ENCODE measurements at regions of chr13 and their contacts with region 1.

Region 1: GRCh38 chr13:110925023-110925612 is 10.2 kb upstream of the ANKRD10 start:
- DNase-seq: no peak
- ATAC-seq: no peak
- H3K4me3 ChIP-seq: no peak overlapping the region
- H3K27ac ChIP-seq: no peak overlapping the region
- H3K4me1 ChIP-seq: peaks cover 15% of the 10 kb centered on the region
- H3K27me3 ChIP-seq: no peaks in the 10 kb centered on the region
- CTCF ChIP-seq: peak; percentile 7 to 16 (median 10); a peak in 1 of 6 replicates
- EP300 ChIP-seq: no peak
- POLR2A ChIP-seq: no peak
- RAD21 ChIP-seq: peak; percentile 45; the same call in 1 of the 2 replicates

Region 2: GRCh38 chr13:110882972-110883371 is 42.1 kb before region 1 on chr13:
- CTCF ChIA-PET with region 1: no interaction called
- POLR2A ChIA-PET with region 1: no interaction called
- RAD21 ChIA-PET with region 1: no interaction called
- SMC1A ChIA-PET with region 1: no interaction called
- in situ Hi-C with region 1: no loop called
- intact Hi-C with region 1: no loop called
- DNase-seq: no peak
- ATAC-seq: no peak
- H3K4me3 ChIP-seq: no peak overlapping the region
- H3K27ac ChIP-seq: no peak overlapping the region
- H3K4me1 ChIP-seq: no peaks in the 10 kb centered on the region
- H3K27me3 ChIP-seq: no peaks in the 10 kb centered on the region
- CTCF ChIP-seq: no peak
- EP300 ChIP-seq: no peak
- POLR2A ChIP-seq: no peak
- RAD21 ChIP-seq: no peak

Region 3: DNA sequence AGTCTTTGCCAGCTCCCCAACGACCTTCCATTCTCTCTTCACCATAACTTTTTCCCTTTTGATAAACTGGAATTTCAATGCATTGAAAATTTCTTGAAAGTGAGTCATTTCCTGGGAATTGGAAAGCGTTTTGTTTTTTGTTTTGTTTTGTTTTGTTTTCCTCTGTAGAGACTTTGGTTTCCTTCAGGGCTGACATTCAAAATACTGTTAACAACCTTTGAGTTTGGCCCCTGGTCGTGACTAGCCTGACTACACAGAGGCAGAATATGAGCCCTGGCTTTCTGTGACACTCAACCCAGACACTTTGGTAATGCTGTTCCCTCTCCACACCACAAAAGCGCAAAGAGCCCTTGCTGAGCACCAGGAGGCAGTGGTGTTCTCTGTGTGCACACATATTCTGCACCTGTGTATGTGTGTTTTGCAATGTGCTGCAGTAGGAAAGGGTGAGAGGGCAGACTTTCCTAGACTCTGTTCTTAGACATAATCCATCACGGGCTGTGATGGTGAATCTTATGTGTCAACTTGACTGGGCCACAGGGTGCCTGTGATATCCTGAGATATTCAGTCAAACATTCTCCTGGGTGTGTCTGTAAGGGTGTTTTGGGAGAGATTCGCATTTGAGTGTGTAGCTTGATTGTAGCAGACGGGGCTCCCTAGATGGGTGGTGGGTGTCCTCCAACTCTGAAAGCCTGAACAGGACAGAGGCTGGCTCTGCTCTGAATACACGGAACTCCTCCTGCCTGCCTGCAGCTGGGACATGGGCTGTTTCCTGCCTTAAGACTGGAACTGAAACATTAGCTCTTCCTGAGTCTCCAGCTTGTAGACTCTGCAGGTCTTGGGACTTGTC is 19.2 kb after region 1 on chr13:
- CTCF ChIA-PET with region 1: interaction called, 4 read pairs
- POLR2A ChIA-PET with region 1: interaction called, 4 read pairs
- RAD21 ChIA-PET with region 1: interaction called, 7 read pairs
- SMC1A ChIA-PET with region 1: interaction called, 7 read pairs
- in situ Hi-C with region 1: no loop called
- intact Hi-C with region 1: loop called (anchors 2 kb)
- DNase-seq: no peak
- ATAC-seq: peak; percentile 86
- H3K4me3 ChIP-seq: no peak overlapping the region
- H3K27ac ChIP-seq: no peak overlapping the region
- H3K4me1 ChIP-seq: peaks cover 8% of the 10 kb centered on the region; the same call in 1 of the 2 replicates
- H3K27me3 ChIP-seq: no peaks in the 10 kb centered on the region
- CTCF ChIP-seq: peak; percentile 48 to 66 (median 63); a peak in 5 of 6 replicates
- EP300 ChIP-seq: no peak
- POLR2A ChIP-seq: no peak
- RAD21 ChIP-seq: peak; percentile 92

Region 4: DNA sequence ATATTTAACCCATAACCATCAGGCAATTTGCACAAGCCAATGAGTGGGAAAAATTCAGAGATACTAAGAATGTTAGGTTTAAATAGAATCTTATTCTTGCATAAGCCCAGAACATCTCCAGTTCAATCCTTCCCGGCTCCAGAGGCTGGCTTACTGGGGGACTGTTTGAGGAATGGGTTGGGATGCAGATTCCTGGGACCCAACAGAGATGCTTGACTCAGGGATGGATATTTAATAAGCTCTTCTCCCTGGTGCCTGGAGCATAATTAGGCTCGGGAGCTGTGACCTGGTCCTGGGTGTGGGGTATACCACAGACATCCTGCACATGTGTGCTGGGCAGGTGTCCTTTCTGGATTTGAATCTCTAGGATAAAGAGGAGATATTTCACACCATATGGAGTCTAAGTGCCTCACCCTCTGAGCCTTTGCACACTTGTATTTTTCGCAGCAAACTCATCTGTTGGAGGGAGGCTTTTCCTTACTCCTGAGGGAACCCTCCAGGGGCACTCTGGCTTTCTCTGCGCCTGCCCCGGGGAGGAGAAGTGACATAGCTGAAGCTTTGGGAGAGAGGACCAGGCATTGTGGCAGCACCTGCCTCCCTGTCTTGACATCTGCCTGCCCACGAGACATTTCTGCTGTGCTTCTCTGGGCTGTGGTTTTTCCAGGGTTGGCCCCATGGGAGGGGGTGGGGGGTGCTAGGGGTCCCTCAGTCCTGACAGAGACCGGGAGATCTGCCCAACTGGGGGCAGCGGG is 25.9 kb after region 1 on chr13:
- CTCF ChIA-PET with region 1: interaction called, 4 read pairs
- POLR2A ChIA-PET with region 1: interaction called, 3 read pairs
- RAD21 ChIA-PET with region 1: interaction called, 11 read pairs
- SMC1A ChIA-PET with region 1: no interaction called
- in situ Hi-C with region 1: no loop called
- intact Hi-C with region 1: no loop called
- DNase-seq: no peak
- ATAC-seq: no peak
- H3K4me3 ChIP-seq: no peak overlapping the region
- H3K27ac ChIP-seq: no peak overlapping the region
- H3K4me1 ChIP-seq: no peaks in the 10 kb centered on the region
- H3K27me3 ChIP-seq: no peaks in the 10 kb centered on the region
- CTCF ChIP-seq: no peak
- EP300 ChIP-seq: no peak
- POLR2A ChIP-seq: no peak
- RAD21 ChIP-seq: no peak

Region 5: DNA sequence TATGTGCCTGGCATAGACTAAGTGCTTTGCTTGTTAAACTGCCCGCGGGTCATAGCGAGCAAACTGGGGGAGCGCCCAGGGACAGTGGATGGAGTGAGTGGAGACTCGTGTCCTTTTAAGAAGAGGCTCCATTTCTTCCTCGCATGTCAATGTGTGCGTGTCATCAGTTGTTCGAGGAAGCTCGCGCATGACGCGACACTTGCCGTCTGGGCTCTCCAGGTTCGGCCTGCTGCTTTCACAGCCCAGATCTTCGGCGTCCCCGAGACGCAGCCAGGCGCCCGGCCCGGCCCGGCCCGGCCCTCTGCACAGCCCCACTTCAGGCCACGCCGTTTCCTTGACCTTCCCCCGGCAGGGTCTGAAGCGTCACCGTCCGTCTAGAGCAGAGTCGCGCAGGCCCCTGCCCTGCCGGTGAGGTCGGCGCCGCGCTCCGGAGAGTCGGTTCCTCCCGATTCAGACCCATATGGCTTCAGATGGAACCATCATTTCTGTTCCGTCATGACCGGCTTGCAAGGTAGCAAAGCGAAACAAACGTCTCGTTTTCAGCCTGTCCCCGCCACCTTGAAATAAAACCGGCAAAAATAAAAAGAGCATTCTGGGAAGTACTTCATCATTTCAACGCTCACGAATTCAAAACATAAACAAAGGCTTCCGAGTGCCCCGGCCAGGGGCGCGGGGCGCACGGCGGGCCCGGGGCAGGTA is 189.4 kb after region 1 on chr13:
- CTCF ChIA-PET with region 1: no interaction called
- POLR2A ChIA-PET with region 1: no interaction called
- RAD21 ChIA-PET with region 1: no interaction called
- SMC1A ChIA-PET with region 1: no interaction called
- in situ Hi-C with region 1: no loop called
- intact Hi-C with region 1: no loop called
- DNase-seq: no peak
- ATAC-seq: peak; percentile 78
- H3K4me3 ChIP-seq: peak overlapping the region; percentile 77; the same call in 1 of the 2 replicates
- H3K27ac ChIP-seq: no peak overlapping the region
- H3K4me1 ChIP-seq: no peaks in the 10 kb centered on the region; the same call in 1 of the 2 replicates
- H3K27me3 ChIP-seq: peaks cover 13 to 37% of the 10 kb centered on the region in 2 experiments
- CTCF ChIP-seq: no peak
- EP300 ChIP-seq: no peak
- POLR2A ChIP-seq: no peak
- RAD21 ChIP-seq: no peak

Region 6: DNA sequence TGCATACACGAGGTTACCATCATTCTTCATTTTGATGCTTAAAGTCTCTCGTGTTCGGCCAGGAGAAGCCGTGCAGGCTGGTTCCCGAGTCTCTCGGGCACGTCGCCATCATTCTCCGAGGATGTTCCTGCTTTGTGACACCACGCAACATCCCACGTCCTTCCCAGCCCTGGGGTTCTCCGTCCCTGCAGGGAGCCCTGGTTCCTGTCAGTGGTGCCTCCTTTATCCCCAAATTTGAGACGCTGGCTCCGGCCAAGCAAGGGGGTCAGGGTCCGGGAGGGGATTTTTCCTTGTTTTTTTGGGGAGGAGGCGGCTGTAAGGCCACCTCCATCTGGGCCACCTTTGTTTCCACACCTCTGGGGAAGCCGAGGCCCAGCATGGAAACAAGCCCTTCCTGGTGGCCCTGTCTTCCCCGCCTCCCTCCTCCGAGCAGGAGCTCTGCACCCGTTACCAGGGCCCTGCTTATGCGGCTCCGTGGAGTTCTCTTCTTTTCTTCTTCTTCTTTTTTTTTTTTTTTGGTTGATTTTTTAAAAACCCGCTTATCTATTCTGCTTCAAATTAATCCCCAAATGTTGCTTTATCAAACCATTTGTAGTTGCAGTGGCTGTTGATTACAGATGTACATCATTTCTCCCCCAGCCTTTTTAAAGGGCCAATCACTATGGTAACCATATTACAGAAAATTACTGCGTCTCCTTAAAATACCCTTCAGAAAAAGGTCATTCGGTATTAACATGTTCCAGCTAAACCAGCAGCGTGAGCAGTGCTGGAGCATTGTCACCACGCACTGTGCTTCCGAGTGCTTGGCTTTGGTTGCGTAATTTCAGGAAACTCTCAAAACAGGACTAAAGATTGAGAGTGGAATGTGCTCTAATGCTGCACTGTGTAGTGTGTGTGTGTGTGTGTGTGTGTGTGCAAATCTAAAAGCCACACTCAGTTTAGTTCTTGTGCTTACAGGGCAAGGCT is 445.7 kb after region 1 on chr13:
- CTCF ChIA-PET with region 1: no interaction called
- POLR2A ChIA-PET with region 1: no interaction called
- RAD21 ChIA-PET with region 1: no interaction called
- SMC1A ChIA-PET with region 1: no interaction called
- in situ Hi-C with region 1: no loop called
- intact Hi-C with region 1: no loop called
- DNase-seq: no peak
- ATAC-seq: no peak
- H3K4me3 ChIP-seq: no peak overlapping the region
- H3K27ac ChIP-seq: no peak overlapping the region
- H3K4me1 ChIP-seq: no peaks in the 10 kb centered on the region
- H3K27me3 ChIP-seq: no peaks in the 10 kb centered on the region; a peak in 1 of 4 replicates
- CTCF ChIP-seq: no peak
- EP300 ChIP-seq: no peak
- POLR2A ChIP-seq: no peak
- RAD21 ChIP-seq: no peak

Region 7: DNA sequence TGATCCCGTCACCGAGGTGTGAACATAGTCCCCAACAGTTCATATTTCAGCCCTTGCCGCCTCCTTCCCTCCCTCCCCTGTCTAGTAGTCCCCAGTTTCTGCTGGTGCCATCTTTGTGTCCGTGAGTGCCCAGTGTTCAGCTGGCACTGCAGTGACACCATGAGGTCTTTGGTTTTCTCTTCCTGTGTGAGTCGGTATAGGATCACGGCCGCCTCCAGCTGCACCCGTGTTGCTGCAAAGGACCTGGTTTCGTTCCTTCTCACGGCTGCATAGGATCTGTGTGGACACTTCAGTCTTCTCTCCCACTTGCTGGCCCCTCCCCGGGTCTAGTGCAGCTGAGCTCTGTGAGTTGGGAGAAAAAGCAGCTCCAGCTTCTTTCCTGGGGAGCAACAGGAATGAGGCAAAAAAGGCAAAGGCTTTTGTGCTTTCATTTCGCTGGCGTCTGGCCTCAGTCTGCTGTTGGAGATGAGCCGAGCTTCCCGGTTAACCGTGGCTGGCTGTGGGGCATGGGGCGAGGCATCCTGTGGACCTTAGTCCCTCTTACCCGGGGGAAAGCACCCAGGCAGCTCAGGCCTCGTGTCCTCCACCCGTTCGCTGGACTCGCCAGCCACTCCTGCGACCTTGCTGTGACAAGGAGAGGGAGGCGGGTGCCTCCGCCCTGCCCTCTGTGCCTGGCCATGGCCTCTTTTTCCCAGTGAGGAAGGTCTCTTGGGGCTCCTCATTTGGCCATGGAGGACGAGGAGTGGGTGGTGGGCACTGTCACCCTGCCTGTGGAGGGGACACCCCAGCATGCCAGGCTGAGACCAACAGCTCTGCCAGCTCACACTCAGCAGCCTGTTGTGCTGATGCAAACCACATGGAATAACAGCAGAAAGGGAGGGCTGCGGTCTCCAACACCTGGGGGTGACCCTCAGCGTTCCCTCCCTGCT is 591.9 kb after region 1 on chr13:
- CTCF ChIA-PET with region 1: no interaction called
- POLR2A ChIA-PET with region 1: no interaction called
- RAD21 ChIA-PET with region 1: no interaction called
- SMC1A ChIA-PET with region 1: no interaction called
- in situ Hi-C with region 1: no loop called
- intact Hi-C with region 1: no loop called
- DNase-seq: no peak
- ATAC-seq: no peak
- H3K4me3 ChIP-seq: no peak overlapping the region
- H3K27ac ChIP-seq: no peak overlapping the region
- H3K4me1 ChIP-seq: no peaks in the 10 kb centered on the region
- H3K27me3 ChIP-seq: no peaks in the 10 kb centered on the region
- CTCF ChIP-seq: no peak
- EP300 ChIP-seq: no peak
- POLR2A ChIP-seq: no peak
- RAD21 ChIP-seq: no peak

Measured in GM12878 (cell line).